PC-3 (cell line): ENCODE measurements at regions of chr16 and their contacts with region 1.

Region 1: DNA sequence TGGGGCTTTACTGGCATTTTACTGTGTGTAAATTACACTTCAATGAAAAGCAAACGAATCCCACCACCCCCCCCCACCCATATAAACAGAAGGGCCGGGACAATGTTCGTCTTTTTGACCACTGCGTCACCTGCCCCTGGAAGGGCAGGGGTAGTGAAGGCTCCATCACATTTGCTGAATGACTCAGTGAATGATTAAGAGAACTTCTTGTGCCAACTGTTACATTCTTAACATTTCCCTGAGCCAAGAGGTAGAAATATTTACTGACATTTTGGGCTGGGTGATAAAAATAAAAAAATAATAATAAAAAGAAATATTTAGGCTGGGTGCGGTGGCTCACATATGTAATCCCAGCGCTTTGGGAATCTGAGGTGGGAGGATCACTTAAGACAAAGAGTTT is 24.1 kb downstream of the C16orf96 start:
- DNase-seq: peak; percentile 87
- ATAC-seq: peak; percentile 97
- H3K4me3 ChIP-seq: no peak overlapping the region
- H3K27ac ChIP-seq: peak overlapping the region; percentile 41; the same call in 1 of the 2 replicates
- H3K4me1 ChIP-seq: peaks cover 11% of the 10 kb centered on the region
- H3K27me3 ChIP-seq: no peaks in the 10 kb centered on the region
- CTCF ChIP-seq: no peak

Region 2: GRCh38 chr16:4506450-4506849 is 73.8 kb before region 1 on chr16:
- CTCF ChIA-PET with region 1: no interaction called
- POLR2A ChIA-PET with region 1: no interaction called
- intact Hi-C with region 1: loop called (anchors 1 kb)
- DNase-seq: peak; percentile 74
- ATAC-seq: peak; percentile 95
- H3K4me3 ChIP-seq: no peak overlapping the region
- H3K27ac ChIP-seq: no peak overlapping the region
- H3K4me1 ChIP-seq: peaks cover 6% of the 10 kb centered on the region
- H3K27me3 ChIP-seq: no peaks in the 10 kb centered on the region
- CTCF ChIP-seq: peak; percentile 85

Region 3: GRCh38 chr16:4517812-4518680 is 62.2 kb before region 1 on chr16:
- CTCF ChIA-PET with region 1: no interaction called
- POLR2A ChIA-PET with region 1: no interaction called
- intact Hi-C with region 1: loop called (anchors 2 kb)
- DNase-seq: peak; percentile 22
- ATAC-seq: peak; percentile 24; the same call in 1 of the 2 replicates
- H3K4me3 ChIP-seq: no peak overlapping the region
- H3K27ac ChIP-seq: no peak overlapping the region
- H3K4me1 ChIP-seq: no peaks in the 10 kb centered on the region
- H3K27me3 ChIP-seq: no peaks in the 10 kb centered on the region
- CTCF ChIP-seq: peak; percentile 66